CD8-positive, alpha-beta memory T cell (primary cell): ENCODE measurements at regions of chr3 and their contacts with region 1.

Region 1: GRCh38 chr3:13245615-13245978 is 172.4 kb upstream of the IQSEC1 start:
- DNase-seq: no peak
- H3K4me3 ChIP-seq: no peak overlapping the region
- H3K4me3 Mint-ChIP-seq: no peak overlapping the region
- H3K27ac ChIP-seq: no peak overlapping the region
- H3K27ac Mint-ChIP-seq: no peak overlapping the region
- H3K4me1 ChIP-seq: no peaks in the 10 kb centered on the region
- H3K4me1 Mint-ChIP-seq: no peaks in the 10 kb centered on the region
- H3K27me3 ChIP-seq: no peaks in the 10 kb centered on the region
- H3K27me3 Mint-ChIP-seq: peaks cover 4 to 5% of the 10 kb centered on the region in 2 donors

Region 2: DNA sequence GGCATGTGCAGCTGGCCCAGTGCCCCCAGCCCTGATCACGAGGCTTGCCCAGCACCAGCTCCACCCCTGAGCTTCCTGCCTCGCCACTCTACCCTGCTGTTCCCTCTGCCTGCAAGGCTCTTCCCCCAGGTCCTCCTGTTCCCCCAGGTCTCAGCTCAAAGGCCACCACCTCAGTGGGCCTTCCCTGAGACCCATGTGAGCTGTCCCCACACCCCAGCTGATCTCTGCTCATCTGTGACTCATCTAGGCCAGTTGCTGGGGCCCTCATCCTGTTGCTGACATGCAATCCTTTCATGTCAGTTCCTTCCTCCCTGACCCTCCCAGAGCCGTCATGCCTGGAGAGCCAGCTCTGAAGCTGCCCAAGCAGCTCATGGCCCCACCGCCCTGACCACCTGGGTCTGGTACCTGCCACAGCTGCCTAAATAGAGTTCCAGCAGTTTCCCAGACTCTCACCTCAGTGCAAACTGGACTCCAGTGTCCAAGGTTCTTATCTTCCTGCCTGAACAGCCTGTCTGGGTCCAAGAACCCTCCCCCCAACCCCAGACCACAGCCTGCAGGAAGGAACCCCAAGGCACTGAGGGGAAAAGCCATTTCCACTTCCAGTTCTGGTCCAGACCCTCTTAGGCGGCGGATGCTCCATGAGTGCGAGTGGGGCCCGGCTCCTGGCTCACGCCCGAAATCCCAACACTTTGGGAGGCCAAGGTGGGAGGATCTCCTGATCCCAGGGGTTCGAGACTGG is 55.8 kb before region 1 on chr3:
- CTCF ChIA-PET with region 1: no interaction called
- POLR2A ChIA-PET with region 1: interaction called, 21 read pairs
- DNase-seq: no peak
- H3K4me3 ChIP-seq: no peak overlapping the region
- H3K4me3 Mint-ChIP-seq: peak overlapping the region in 6 of 7 donors; percentile 38 to 90 (median 69)
- H3K27ac ChIP-seq: no peak overlapping the region
- H3K27ac Mint-ChIP-seq: peak overlapping the region in 7 of 8 donors; percentile 22 to 98 (median 92)
- H3K4me1 ChIP-seq: no peaks in the 10 kb centered on the region
- H3K4me1 Mint-ChIP-seq: peaks cover 11 to 28% (median 25%) of the 10 kb centered on the region in 3 donors
- H3K27me3 ChIP-seq: no peaks in the 10 kb centered on the region
- H3K27me3 Mint-ChIP-seq: peaks cover 9 to 57% of the 10 kb centered on the region in 2 donors